Activated CD4-positive, alpha-beta T cell treated with anti-CD3 and anti-CD28 coated beads, Interleukin-2, amount 10 ng/mL, durations not matched to agents 7 days and 5 days (primary cell): ENCODE measurements at regions of chr14 and their contacts with region 1.

Region 1: DNA sequence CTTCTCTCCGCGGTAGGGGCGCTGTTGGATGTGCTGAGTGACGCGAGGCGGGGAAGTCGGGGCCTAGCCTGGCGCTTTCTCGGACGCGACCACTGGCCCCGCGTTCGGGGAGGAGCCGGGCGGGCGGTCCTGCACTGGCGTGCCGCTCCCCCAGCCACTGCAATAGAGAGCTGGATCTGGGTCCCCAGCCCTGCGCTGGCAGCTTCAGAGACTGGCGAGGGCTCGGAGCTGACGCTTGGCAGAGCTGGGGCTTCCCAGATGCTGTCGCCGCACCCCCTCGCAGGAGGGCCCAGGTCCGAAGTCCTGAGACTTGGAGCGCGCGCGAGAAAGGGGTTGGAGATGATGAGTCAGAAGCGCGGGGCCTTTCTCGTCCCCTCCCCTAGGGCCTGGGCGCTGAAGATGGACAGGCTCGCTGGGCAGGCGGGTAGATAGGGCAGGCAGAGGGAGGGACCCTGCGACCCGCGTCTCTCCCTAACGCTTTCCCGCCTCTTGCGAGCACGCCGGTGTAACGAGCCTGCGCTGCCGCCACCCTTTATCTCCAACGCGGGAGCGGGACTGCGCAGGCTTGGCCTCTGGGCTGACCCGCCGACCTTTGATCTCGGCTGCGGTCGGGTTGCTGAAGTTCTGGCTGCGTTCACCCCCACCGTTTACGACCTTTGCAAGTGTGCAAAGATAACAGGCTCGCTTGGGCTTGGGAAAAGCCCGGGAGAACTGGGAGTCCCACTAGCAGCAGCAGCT is 3.0 kb downstream of the TMEM253 start:
- DNase-seq: peak; percentile 97
- H3K4me3 Mint-ChIP-seq: peak overlapping the region; percentile 87
- H3K27ac Mint-ChIP-seq: peak overlapping the region; percentile 93
- H3K4me1 Mint-ChIP-seq: peaks cover 44% of the 10 kb centered on the region
- H3K27me3 Mint-ChIP-seq: peaks cover 7% of the 10 kb centered on the region

Region 2: GRCh38 chr14:21023817-21024584 is 79.9 kb before region 1 on chr14:
- CTCF ChIA-PET with region 1: interaction called, 92 read pairs
- POLR2A ChIA-PET with region 1: no interaction called
- DNase-seq: no peak
- H3K4me3 Mint-ChIP-seq: peak overlapping the region; percentile 72
- H3K27ac Mint-ChIP-seq: peak overlapping the region; percentile 60
- H3K4me1 Mint-ChIP-seq: peaks cover 14% of the 10 kb centered on the region
- H3K27me3 Mint-ChIP-seq: peaks cover 24% of the 10 kb centered on the region

Region 3: GRCh38 chr14:21071225-21072030 is 32.5 kb before region 1 on chr14:
- CTCF ChIA-PET with region 1: interaction called, 21 read pairs
- POLR2A ChIA-PET with region 1: no interaction called
- DNase-seq: peak; percentile 50
- H3K4me3 Mint-ChIP-seq: peak overlapping the region; percentile 61
- H3K27ac Mint-ChIP-seq: no peak overlapping the region
- H3K4me1 Mint-ChIP-seq: peaks cover 34% of the 10 kb centered on the region
- H3K27me3 Mint-ChIP-seq: peaks cover 63% of the 10 kb centered on the region

Region 4: GRCh38 chr14:21123429-21123828 is 19.6 kb after region 1 on chr14:
- CTCF ChIA-PET with region 1: interaction called, 12 read pairs
- POLR2A ChIA-PET with region 1: no interaction called
- DNase-seq: no peak
- H3K4me3 Mint-ChIP-seq: no peak overlapping the region
- H3K27ac Mint-ChIP-seq: no peak overlapping the region
- H3K4me1 Mint-ChIP-seq: peaks cover 3% of the 10 kb centered on the region
- H3K27me3 Mint-ChIP-seq: peaks cover 32% of the 10 kb centered on the region

Region 5: GRCh38 chr14:21367582-21368144 is 263.8 kb after region 1 on chr14:
- CTCF ChIA-PET with region 1: no interaction called
- POLR2A ChIA-PET with region 1: no interaction called
- DNase-seq: no peak
- H3K4me3 Mint-ChIP-seq: no peak overlapping the region
- H3K27ac Mint-ChIP-seq: no peak overlapping the region
- H3K4me1 Mint-ChIP-seq: peaks cover 10% of the 10 kb centered on the region
- H3K27me3 Mint-ChIP-seq: no peaks in the 10 kb centered on the region